Natural killer cell (primary cell): ENCODE measurements at regions of chr2 and their contacts with region 1.

Region 1: GRCh38 chr2:220687231-220687843 is 884.8 kb downstream of the EPHA4 start:
- DNase-seq: peak; percentile 47 to 74
- ATAC-seq: peak; percentile 78 to 97 (median 96)
- H3K4me3 ChIP-seq: no peak overlapping the region
- H3K4me3 Mint-ChIP-seq: no peak overlapping the region
- H3K27ac ChIP-seq: no peak overlapping the region
- H3K27ac Mint-ChIP-seq: no peak overlapping the region
- H3K4me1 ChIP-seq: no peaks in the 10 kb centered on the region
- H3K4me1 Mint-ChIP-seq: no peaks in the 10 kb centered on the region
- H3K27me3 ChIP-seq: no peaks in the 10 kb centered on the region
- H3K27me3 Mint-ChIP-seq: peaks cover 22 to 28% of the 10 kb centered on the region in 2 donors
- CTCF ChIP-seq: peak; percentile 79

Region 2: DNA sequence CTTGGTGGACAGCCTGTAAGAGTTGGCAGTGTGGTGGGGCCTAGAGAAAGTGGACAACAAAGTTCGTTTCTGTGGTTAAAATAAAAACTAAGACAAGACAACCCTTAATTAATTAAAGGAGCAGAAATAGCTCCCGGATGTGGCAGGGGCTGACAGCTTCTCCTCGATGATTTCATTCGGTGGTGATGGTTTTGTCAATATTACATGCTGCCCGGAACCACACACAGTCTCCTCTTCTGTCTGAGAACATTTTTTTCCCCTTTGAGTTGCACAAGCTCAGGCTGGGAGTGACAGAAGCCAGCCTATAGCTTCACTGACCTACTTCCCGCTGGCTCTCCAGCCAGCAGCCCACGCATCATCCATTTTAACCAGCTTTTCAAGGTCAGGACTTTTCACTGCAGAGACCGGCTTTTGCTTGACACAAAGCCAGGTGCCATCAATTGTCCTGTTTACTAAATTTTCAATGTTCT is 681.1 kb before region 1 on chr2:
- intact Hi-C with region 1: no loop called
- DNase-seq: no peak
- ATAC-seq: no peak
- H3K4me3 ChIP-seq: no peak overlapping the region
- H3K4me3 Mint-ChIP-seq: no peak overlapping the region
- H3K27ac ChIP-seq: no peak overlapping the region
- H3K27ac Mint-ChIP-seq: no peak overlapping the region
- H3K4me1 ChIP-seq: no peaks in the 10 kb centered on the region
- H3K4me1 Mint-ChIP-seq: no peaks in the 10 kb centered on the region
- H3K27me3 ChIP-seq: no peaks in the 10 kb centered on the region
- H3K27me3 Mint-ChIP-seq: no peaks in the 10 kb centered on the region
- CTCF ChIP-seq: no peak

Region 3: GRCh38 chr2:222613715-222614331 is 1926.5 kb after region 1 on chr2:
- intact Hi-C with region 1: loop called (anchors 5 kb)
- DNase-seq: peak in 1 of 2 donors; percentile 50
- ATAC-seq: peak in 2 of 3 donors; percentile 52 to 68
- H3K4me3 ChIP-seq: no peak overlapping the region
- H3K4me3 Mint-ChIP-seq: no peak overlapping the region
- H3K27ac ChIP-seq: no peak overlapping the region
- H3K27ac Mint-ChIP-seq: no peak overlapping the region
- H3K4me1 ChIP-seq: no peaks in the 10 kb centered on the region
- H3K4me1 Mint-ChIP-seq: no peaks in the 10 kb centered on the region
- H3K27me3 ChIP-seq: no peaks in the 10 kb centered on the region
- H3K27me3 Mint-ChIP-seq: no peaks in the 10 kb centered on the region
- CTCF ChIP-seq: peak; percentile 63